Activated naive CD4-positive, alpha-beta T cell treated with anti-CD3 and anti-CD28 coated beads, Interleukin-2, amount 10 ng/mL, durations not matched to agents 7 days and 5 days (primary cell): ENCODE measurements at regions of chr7 and their contacts with region 1.

Region 1: GRCh38 chr7:6577365-6578113 is at the start of gene ZDHHC4:
- DNase-seq: peak; percentile 90
- H3K4me3 Mint-ChIP-seq: peak within 1 kb of the TSS; percentile 88
- H3K27ac Mint-ChIP-seq: peak within 1 kb of the TSS; percentile 86
- H3K4me1 Mint-ChIP-seq: peaks cover 44% of the 10 kb centered on the region
- H3K27me3 Mint-ChIP-seq: peaks cover 7% of the 10 kb centered on the region

Region 2: GRCh38 chr7:6516387-6516983 is 61.1 kb before region 1 on chr7:
- CTCF ChIA-PET with region 1: interaction called, 19 read pairs
- DNase-seq: peak; percentile 76
- H3K4me3 Mint-ChIP-seq: peak overlapping the region; percentile 65
- H3K27ac Mint-ChIP-seq: no peak overlapping the region
- H3K4me1 Mint-ChIP-seq: peaks cover 5% of the 10 kb centered on the region
- H3K27me3 Mint-ChIP-seq: peaks cover 11% of the 10 kb centered on the region

Region 3: DNA sequence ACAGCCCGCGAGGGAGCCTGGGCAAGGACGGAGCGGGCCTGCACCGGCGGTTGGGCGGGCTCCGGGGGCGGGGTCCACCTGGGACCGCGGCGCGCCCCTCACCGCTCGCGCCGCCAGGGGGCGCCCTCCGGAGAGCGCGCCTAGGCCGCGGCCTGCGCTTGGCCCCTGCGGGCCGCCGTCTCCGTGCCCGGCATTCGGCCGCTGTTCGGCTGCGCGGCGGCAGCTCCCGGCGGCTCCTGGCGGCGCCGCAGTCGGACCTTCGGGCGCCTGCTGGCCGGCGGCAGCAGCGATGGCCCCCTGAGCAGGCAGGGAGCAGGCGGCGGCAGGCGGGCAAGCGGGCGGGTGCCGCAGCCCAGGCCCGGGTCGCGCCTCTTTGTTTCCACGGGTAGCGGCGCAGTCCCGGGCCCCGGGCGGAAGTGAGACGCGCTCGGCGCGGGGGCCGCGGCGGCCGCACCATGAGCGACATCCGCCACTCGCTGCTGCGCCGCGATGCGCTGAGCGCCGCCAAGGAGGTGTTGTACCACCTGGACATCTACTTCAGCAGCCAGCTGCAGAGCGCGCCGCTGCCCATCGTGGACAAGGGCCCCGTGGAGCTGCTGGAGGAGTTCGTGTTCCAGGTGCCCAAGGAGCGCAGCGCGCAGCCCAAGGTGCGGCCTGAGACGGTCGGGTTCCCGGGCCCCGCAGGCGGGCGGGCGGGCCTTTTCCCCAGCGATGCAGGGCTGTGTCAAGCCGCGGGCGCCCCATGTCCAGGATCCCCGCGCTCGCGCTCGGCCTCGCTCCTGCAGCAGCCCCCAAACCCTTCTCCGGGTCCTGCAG is 12.5 kb after region 1 on chr7 and contains the start of gene INTS15:
- CTCF ChIA-PET with region 1: interaction called, 12 read pairs
- DNase-seq: peak; percentile 84
- H3K4me3 Mint-ChIP-seq: peak within 1 kb of the TSS; percentile 86
- H3K27ac Mint-ChIP-seq: peak within 1 kb of the TSS; percentile 90
- H3K4me1 Mint-ChIP-seq: peaks cover 21% of the 10 kb centered on the region
- H3K27me3 Mint-ChIP-seq: no peaks in the 10 kb centered on the region

Region 4: DNA sequence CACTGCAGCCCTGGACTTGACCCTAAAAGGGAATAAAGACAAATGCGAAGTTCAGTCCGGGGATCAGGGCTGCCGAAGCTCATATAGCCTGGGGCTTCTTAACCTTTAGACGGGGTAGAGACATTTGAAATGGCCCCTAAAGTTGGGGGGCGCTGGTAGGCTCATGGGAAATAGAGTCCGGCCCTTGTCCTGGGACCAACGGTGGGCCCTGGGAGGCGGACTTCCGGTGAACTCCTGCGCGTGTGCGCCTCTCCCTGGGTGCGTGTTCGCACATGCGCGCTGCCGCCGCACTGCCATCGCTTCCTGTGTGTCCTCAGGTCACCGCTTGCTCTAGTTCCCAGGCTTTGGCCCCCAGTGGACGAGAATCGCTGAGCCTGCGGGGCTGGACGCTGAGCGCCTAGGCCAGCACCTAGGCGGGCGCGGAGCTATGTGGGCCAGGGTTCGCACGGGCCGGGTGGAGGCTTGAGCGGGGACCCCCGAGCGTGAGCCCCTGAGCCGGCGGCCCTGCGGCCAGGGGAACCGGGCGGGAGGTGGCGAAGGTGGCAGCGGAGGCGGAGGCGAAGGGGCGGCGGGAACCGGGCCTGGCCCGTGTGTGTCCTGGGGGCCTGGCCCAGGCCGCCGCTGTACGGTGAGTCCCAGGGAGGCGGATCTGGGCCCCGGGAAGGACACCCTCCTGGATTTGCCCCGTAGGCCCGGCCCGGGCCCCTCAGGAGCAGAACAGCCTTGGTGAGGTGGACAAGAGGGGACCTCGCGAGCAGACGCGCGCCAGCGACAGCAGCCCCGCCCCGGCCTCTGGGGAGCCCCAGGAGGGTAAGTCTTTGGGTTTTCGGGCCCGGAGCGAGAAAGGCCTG is 152.2 kb after region 1 on chr7:
- CTCF ChIA-PET with region 1: no interaction called
- DNase-seq: peak; percentile 89
- H3K4me3 Mint-ChIP-seq: peak overlapping the region; percentile 97
- H3K27ac Mint-ChIP-seq: peak overlapping the region; percentile 88
- H3K4me1 Mint-ChIP-seq: peaks cover 39% of the 10 kb centered on the region
- H3K27me3 Mint-ChIP-seq: peaks cover 12% of the 10 kb centered on the region